Left ventricle myocardium inferior (tissue), 1 donor: ENCODE measurements at regions of chr4 and their contacts with region 1.

Region 1: DNA sequence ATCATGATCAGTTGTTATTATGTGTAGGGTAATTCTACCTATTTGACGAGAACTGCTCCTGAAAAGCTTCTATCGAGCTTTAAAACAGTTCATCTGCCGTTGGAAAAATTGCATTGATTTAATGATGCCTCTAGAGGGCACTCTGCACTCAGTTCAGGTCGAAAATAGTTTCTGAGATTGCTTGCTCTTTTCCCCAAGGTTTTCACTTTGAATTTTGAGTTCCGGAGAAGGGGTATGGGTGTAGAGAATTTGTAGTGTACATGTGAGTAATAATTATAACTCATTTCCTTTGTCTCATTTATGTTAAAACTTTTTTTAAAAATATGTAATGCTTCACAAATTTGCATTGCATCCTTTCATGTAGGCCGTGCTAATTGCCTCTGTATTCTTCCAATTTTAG is 28.4 kb upstream of the TNIP3 start:
- DNase-seq: no peak
- H3K4me3 ChIP-seq: peak overlapping the region; percentile 38
- H3K27ac ChIP-seq: no peak overlapping the region
- H3K4me1 ChIP-seq: peaks cover 4% of the 10 kb centered on the region
- H3K27me3 ChIP-seq: peaks cover 16% of the 10 kb centered on the region
- CTCF ChIP-seq: peak; percentile 78

Region 2: DNA sequence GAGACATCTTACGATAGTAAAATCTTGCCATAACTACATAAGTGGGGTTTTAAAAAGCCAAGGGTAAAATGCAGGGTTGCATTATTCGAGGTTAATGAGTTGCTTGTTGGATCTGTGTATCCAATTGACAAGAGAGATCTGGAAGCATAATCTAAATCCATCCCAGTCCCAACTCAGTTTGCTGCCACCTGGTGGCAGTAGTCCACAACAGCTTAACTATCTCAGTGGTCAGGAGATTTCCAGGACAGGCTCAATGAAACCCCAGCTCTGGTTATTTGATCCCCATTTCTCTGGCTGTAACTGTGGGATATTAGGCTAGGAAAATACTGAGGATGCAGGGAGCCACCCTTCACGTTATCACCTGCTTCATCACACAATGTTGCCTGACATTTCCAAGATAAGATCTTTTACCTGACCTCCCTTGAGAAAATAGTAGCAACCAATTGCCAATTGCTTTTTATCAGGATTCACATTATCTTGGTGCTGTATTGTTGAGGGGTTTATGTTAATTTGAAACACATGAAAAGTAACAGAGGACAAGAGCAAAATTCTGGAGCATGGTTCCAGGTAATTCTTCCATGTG is 59.8 kb after region 1 on chr4:
- intact Hi-C with region 1: loop called (anchors 5 kb)
- DNase-seq: peak; percentile 32
- H3K4me3 ChIP-seq: no peak overlapping the region
- H3K27ac ChIP-seq: no peak overlapping the region
- H3K4me1 ChIP-seq: no peaks in the 10 kb centered on the region
- H3K27me3 ChIP-seq: no peaks in the 10 kb centered on the region
- CTCF ChIP-seq: peak; percentile 90